Esophagus muscularis mucosa (tissue), 4 donors: ENCODE measurements at regions of chrX and their contacts with region 1.

Region 1: DNA sequence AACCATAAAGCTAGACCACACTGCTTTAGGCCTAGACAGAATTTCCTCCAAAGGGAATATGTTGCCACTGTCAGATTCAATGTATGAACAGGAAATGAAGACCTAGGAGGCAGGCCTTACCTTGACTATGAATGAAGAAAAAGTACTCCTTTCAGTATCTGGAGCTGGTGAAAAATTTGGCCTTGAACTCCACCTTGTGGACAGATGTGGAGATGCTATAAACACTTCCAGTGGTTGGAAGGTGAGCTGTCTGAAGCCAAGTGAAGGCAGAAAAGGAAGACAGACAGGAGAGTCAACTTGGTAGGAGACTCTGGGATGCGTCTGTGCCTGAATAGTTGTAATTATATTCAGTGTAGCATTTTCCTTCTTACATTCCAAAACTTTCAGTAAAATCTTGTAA is 17.2 kb downstream of the SPIN3 start:
- DNase-seq: no peak
- H3K4me3 ChIP-seq: no peak overlapping the region
- H3K27ac ChIP-seq: no peak overlapping the region
- H3K4me1 ChIP-seq: no peaks in the 10 kb centered on the region
- H3K27me3 ChIP-seq: no peaks in the 10 kb centered on the region
- CTCF ChIP-seq: peak; percentile 49 to 57 (median 56)
- EP300 ChIP-seq: no peak
- POLR2A ChIP-seq: no peak

Region 2: DNA sequence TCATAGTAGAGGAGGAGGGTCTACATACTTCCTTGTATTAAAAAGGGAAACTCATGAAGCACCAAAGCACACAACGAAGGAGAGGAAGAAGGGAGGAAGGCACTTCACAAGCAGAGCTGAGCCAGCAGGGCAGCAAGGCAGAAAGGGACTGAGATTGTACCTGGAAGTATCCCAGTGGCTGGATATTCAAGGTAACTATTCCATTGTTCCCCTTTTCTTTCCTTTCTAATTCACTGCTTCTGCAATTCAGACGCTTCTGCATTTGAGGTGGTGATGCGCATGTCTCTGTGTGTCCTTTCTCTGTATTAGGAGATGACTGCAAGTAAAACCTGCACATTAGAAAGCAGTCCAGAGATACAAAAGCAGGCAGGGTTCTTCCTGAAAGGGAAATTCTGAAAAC is 359.8 kb before region 1 on chrX:
- intact Hi-C with region 1: no loop called
- DNase-seq: no peak
- H3K4me3 ChIP-seq: no peak overlapping the region
- H3K27ac ChIP-seq: no peak overlapping the region
- H3K4me1 ChIP-seq: no peaks in the 10 kb centered on the region
- H3K27me3 ChIP-seq: no peaks in the 10 kb centered on the region
- CTCF ChIP-seq: no peak
- EP300 ChIP-seq: no peak
- POLR2A ChIP-seq: no peak

Region 3: GRCh38 chrX:56813318-56813837 is 164.8 kb before region 1 on chrX:
- intact Hi-C with region 1: loop called (anchors 5 kb)
- DNase-seq: no peak
- H3K4me3 ChIP-seq: no peak overlapping the region
- H3K27ac ChIP-seq: peak overlapping the region in 1 of 4 donors; percentile 22
- H3K4me1 ChIP-seq: peaks cover 0 to 5% (median 1%) of the 10 kb centered on the region in 4 donors
- H3K27me3 ChIP-seq: no peaks in the 10 kb centered on the region
- CTCF ChIP-seq: no peak
- EP300 ChIP-seq: no peak
- POLR2A ChIP-seq: no peak